GM12878 (cell line): ENCODE measurements at regions of chr2 and their contacts with region 1.

Region 1: GRCh38 chr2:179129574-179130238 is 79.8 kb upstream of the CCDC141 start:
- DNase-seq: no peak
- ATAC-seq: peak; percentile 79
- H3K4me3 ChIP-seq: no peak overlapping the region
- H3K27ac ChIP-seq: no peak overlapping the region
- H3K4me1 ChIP-seq: no peaks in the 10 kb centered on the region
- H3K27me3 ChIP-seq: no peaks in the 10 kb centered on the region
- CTCF ChIP-seq: peak; percentile 57 to 76 (median 63); a peak in 5 of 6 replicates
- EP300 ChIP-seq: no peak
- POLR2A ChIP-seq: no peak
- RAD21 ChIP-seq: peak; percentile 90

Region 2: DNA sequence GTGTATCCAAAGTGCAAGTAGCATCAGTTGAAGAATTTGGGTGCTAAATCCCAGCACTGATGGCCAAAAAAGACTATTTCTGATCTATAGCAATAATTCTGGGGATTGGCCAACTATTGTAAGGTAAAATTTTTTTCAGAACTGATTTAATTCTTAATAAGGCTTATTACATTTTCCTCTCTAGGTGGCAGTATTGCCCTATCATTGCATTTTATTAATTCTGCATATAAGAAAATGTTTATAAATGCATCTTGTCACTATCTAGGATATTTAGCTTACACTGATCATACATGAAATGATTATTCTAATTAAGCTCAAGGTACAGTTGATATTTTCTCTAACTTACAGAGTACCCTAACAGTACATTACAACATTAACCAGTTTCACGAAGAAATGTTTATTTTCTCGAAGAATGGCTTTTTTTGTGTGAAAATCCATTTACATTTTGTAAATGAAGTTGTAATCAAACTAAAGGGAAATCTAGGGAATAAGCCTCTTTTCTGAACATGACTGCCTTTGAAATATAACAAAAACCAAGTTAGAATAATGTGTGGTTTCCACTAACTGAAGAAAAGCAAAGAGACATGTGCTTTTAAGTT is 333.5 kb before region 1 on chr2:
- CTCF ChIA-PET with region 1: interaction called, 48 read pairs
- POLR2A ChIA-PET with region 1: no interaction called
- RAD21 ChIA-PET with region 1: interaction called, 18 read pairs
- SMC1A ChIA-PET with region 1: interaction called, 14 read pairs
- in situ Hi-C with region 1: loop called (anchors 10 kb)
- intact Hi-C with region 1: loop called (anchors 5 kb)
- DNase-seq: no peak
- ATAC-seq: peak; percentile 46; the same call in 1 of the 3 replicates
- H3K4me3 ChIP-seq: no peak overlapping the region
- H3K27ac ChIP-seq: no peak overlapping the region
- H3K4me1 ChIP-seq: no peaks in the 10 kb centered on the region
- H3K27me3 ChIP-seq: no peaks in the 10 kb centered on the region
- CTCF ChIP-seq: peak; percentile 29 to 57 (median 44); a peak in 3 of 6 replicates
- EP300 ChIP-seq: no peak
- POLR2A ChIP-seq: no peak
- RAD21 ChIP-seq: peak; percentile 62

Region 3: DNA sequence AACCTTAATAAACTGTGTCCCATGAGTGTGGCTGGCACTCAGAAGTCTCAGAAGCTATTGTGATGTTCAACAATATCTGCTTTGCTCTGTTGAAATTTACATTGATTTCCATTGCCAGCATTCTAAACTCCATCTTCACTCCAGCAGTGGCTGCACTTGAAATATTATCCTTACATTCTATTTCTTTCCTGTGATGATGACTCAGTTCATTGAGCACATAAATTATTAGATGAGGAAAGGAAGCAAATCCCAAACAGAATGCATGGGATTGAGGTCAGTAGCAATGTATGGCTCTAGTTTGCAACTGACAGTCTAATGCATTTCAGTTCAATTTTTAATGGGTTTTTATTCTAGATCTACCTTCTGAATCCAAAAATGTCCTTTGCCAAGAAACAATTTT is 230.1 kb before region 1 on chr2:
- CTCF ChIA-PET with region 1: interaction called, 69 read pairs
- POLR2A ChIA-PET with region 1: interaction called, 6 read pairs
- RAD21 ChIA-PET with region 1: interaction called, 46 read pairs
- SMC1A ChIA-PET with region 1: interaction called, 54 read pairs
- in situ Hi-C with region 1: loop called (anchors 10 kb)
- intact Hi-C with region 1: no loop called
- DNase-seq: no peak
- ATAC-seq: no peak
- H3K4me3 ChIP-seq: no peak overlapping the region
- H3K27ac ChIP-seq: no peak overlapping the region
- H3K4me1 ChIP-seq: no peaks in the 10 kb centered on the region
- H3K27me3 ChIP-seq: no peaks in the 10 kb centered on the region
- CTCF ChIP-seq: no peak
- EP300 ChIP-seq: no peak
- POLR2A ChIP-seq: no peak
- RAD21 ChIP-seq: no peak

Region 4: DNA sequence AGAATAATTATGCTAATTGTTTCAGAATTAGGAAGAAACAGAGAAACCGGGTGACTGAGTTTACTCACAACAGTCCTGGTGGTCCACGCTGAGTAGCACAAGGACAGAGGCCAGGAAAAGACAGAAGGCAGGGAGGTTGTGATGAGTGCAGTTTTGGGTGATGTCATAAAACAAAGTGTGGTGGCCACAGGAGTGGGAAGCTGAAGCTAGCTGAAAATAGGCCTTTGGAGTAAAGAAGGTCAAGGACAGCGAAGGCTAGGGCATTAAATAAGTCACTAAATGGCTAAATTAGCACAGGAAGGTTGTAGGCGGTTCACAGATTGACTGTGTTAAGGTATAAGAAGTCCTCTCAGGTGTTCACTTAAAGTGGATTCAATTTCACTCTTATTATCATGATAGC is 201.6 kb before region 1 on chr2:
- CTCF ChIA-PET with region 1: interaction called, 38 read pairs
- POLR2A ChIA-PET with region 1: no interaction called
- RAD21 ChIA-PET with region 1: interaction called, 32 read pairs
- SMC1A ChIA-PET with region 1: interaction called, 40 read pairs
- in situ Hi-C with region 1: no loop called
- intact Hi-C with region 1: no loop called
- DNase-seq: peak; percentile 24
- ATAC-seq: peak; percentile 85
- H3K4me3 ChIP-seq: 0 out of 2 replicates have a peak overlapping the region, but pooled peaks have one; percentile 64
- H3K27ac ChIP-seq: no peak overlapping the region; the same call in 1 of the 2 replicates
- H3K4me1 ChIP-seq: peaks cover 14% of the 10 kb centered on the region
- H3K27me3 ChIP-seq: no peaks in the 10 kb centered on the region
- CTCF ChIP-seq: no peak
- EP300 ChIP-seq: no peak
- POLR2A ChIP-seq: no peak
- RAD21 ChIP-seq: no peak

Region 5: GRCh38 chr2:179020156-179020750 is 109.5 kb before region 1 on chr2:
- CTCF ChIA-PET with region 1: interaction called, 173 read pairs
- POLR2A ChIA-PET with region 1: interaction called, 18 read pairs
- RAD21 ChIA-PET with region 1: interaction called, 122 read pairs
- SMC1A ChIA-PET with region 1: interaction called, 120 read pairs
- in situ Hi-C with region 1: no loop called
- intact Hi-C with region 1: loop called (anchors 1 kb)
- DNase-seq: no peak
- ATAC-seq: peak; percentile 73
- H3K4me3 ChIP-seq: no peak overlapping the region
- H3K27ac ChIP-seq: peak overlapping the region; percentile 71; the same call in 1 of the 2 replicates
- H3K4me1 ChIP-seq: peaks cover 34% of the 10 kb centered on the region
- H3K27me3 ChIP-seq: no peaks in the 10 kb centered on the region
- CTCF ChIP-seq: peak; percentile 68 to 73 (median 69)
- EP300 ChIP-seq: no peak
- POLR2A ChIP-seq: no peak
- RAD21 ChIP-seq: peak; percentile 89

Region 6: GRCh38 chr2:179059026-179059700 is 70.5 kb before region 1 on chr2:
- CTCF ChIA-PET with region 1: interaction called, 12 read pairs
- POLR2A ChIA-PET with region 1: interaction called, 3 read pairs
- RAD21 ChIA-PET with region 1: interaction called, 12 read pairs
- SMC1A ChIA-PET with region 1: interaction called, 11 read pairs
- in situ Hi-C with region 1: no loop called
- intact Hi-C with region 1: no loop called
- DNase-seq: no peak
- ATAC-seq: peak; percentile 94
- H3K4me3 ChIP-seq: no peak overlapping the region
- H3K27ac ChIP-seq: peak overlapping the region; percentile 4; the same call in 1 of the 2 replicates
- H3K4me1 ChIP-seq: peaks cover 9% of the 10 kb centered on the region
- H3K27me3 ChIP-seq: no peaks in the 10 kb centered on the region
- CTCF ChIP-seq: no peak
- EP300 ChIP-seq: no peak
- POLR2A ChIP-seq: no peak
- RAD21 ChIP-seq: no peak

Region 7: DNA sequence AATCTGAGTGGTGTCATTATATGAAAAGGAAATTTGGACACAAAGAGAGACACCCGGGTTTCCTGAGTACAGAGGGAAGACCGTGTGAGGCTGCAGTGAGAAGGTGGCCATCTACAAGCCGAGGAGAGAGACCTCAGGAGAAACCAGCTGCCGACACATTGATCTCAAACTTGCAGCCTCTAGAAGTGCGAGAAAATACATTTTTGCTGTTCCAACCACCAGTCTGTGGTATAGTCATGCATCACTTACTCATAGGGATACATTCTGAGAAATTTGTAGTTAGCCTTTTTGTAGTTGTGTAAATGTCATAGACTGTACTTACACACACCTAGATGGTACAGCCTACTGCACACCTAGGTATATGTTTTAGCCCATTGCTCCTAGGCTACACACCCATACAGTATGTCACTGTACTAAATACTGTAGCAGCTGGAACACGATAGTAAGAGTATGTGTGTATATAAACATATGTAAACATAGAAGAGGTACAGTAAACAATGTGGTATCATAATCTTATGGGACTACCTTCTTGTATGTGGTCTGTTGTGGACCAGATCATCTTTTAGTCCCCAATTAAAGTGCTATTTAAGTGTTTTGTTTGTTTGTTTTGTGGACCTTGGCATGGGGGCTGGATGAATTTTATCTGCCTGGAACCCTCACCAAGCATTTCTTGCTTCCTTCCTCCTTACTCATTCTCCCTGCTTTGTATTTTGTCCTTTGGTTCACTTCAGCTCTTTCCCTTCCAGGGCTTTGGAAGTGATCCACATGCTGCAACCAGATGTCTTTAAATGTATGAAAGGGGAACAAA is 173.3 kb after region 1 on chr2:
- CTCF ChIA-PET with region 1: no interaction called
- POLR2A ChIA-PET with region 1: no interaction called
- RAD21 ChIA-PET with region 1: no interaction called
- SMC1A ChIA-PET with region 1: no interaction called
- in situ Hi-C with region 1: no loop called
- intact Hi-C with region 1: no loop called
- DNase-seq: no peak
- ATAC-seq: no peak
- H3K4me3 ChIP-seq: no peak overlapping the region
- H3K27ac ChIP-seq: no peak overlapping the region
- H3K4me1 ChIP-seq: no peaks in the 10 kb centered on the region
- H3K27me3 ChIP-seq: no peaks in the 10 kb centered on the region; a peak in 1 of 4 replicates
- CTCF ChIP-seq: no peak
- EP300 ChIP-seq: no peak
- POLR2A ChIP-seq: no peak
- RAD21 ChIP-seq: no peak

Region 8: GRCh38 chr2:179322289-179322688 is 192.6 kb after region 1 on chr2:
- CTCF ChIA-PET with region 1: no interaction called
- POLR2A ChIA-PET with region 1: no interaction called
- RAD21 ChIA-PET with region 1: no interaction called
- SMC1A ChIA-PET with region 1: no interaction called
- in situ Hi-C with region 1: no loop called
- intact Hi-C with region 1: no loop called
- DNase-seq: no peak
- ATAC-seq: no peak
- H3K4me3 ChIP-seq: no peak overlapping the region
- H3K27ac ChIP-seq: no peak overlapping the region
- H3K4me1 ChIP-seq: no peaks in the 10 kb centered on the region
- H3K27me3 ChIP-seq: no peaks in the 10 kb centered on the region
- CTCF ChIP-seq: no peak
- EP300 ChIP-seq: no peak
- POLR2A ChIP-seq: no peak
- RAD21 ChIP-seq: no peak